Activated B cell treated with CpG ODN at 0.5 μM for 24 hours (primary cell): ENCODE measurements at regions of chr9 and their contacts with region 1.

Region 1: GRCh38 chr9:131709771-131710454 is 30.0 kb downstream of the RAPGEF1 start:
- DNase-seq: no peak
- ATAC-seq: peak; percentile 49
- H3K4me3 Mint-ChIP-seq: peak overlapping the region; percentile 44
- H3K27ac Mint-ChIP-seq: peak overlapping the region; percentile 70
- H3K4me1 Mint-ChIP-seq: peaks cover 92% of the 10 kb centered on the region
- H3K27me3 Mint-ChIP-seq: no peaks in the 10 kb centered on the region
- CTCF ChIP-seq: no peak

Region 2: DNA sequence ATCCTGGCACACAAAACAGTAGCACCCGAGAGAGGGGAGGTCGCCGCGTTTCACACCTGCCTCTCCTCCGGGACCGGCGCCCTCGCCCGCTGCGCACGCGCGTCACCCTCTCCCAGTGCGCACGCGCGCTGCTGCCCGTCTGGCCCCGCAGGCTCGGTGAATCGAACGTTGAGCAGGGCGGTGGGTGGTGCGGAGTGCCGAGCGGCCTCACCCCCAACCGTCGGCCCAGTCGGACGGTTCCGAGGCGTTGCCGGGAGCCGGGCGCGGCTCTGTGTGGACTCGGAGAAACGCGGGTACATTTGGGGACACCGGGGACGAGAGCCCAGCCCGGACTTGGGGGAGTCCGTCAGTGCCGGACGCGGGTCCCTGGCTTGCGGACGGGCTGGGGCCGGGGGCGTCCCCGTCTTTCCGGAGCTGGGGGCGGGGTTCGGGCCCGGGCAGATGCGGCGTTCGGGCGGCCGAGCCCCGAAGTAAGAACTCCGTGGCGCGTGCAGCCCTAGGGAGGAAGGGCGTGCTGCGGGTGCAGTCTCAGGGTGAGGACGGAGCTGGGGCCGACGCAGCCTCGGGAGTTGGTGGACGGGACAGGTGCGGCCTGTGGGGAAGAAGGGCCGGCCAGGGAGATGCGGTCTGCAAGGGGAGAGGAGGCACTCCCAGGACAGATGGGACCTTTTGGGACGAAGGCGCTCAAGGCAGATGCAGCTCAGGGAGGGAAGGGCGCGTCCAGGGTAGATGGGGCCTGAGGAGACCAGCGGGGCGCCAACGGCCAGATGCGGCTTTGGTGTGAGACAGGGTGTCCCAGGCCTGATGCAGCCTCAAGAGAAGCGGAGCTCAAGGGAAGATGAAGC is 206.9 kb before region 1 on chr9 and contains the start of gene POMT1:
- CTCF ChIA-PET with region 1: no interaction called
- POLR2A ChIA-PET with region 1: no interaction called
- intact Hi-C with region 1: no loop called
- DNase-seq: peak; percentile 89
- ATAC-seq: peak; percentile 87
- H3K4me3 Mint-ChIP-seq: peak within 1 kb of the TSS; percentile 90
- H3K27ac Mint-ChIP-seq: peak within 1 kb of the TSS; percentile 72
- H3K4me1 Mint-ChIP-seq: peaks cover 25% of the 10 kb centered on the region
- H3K27me3 Mint-ChIP-seq: no peaks in the 10 kb centered on the region
- CTCF ChIP-seq: no peak
- total RNA-seq, gene POMT1: 24.9 and 29.8 TPM in 2 replicates

Region 3: DNA sequence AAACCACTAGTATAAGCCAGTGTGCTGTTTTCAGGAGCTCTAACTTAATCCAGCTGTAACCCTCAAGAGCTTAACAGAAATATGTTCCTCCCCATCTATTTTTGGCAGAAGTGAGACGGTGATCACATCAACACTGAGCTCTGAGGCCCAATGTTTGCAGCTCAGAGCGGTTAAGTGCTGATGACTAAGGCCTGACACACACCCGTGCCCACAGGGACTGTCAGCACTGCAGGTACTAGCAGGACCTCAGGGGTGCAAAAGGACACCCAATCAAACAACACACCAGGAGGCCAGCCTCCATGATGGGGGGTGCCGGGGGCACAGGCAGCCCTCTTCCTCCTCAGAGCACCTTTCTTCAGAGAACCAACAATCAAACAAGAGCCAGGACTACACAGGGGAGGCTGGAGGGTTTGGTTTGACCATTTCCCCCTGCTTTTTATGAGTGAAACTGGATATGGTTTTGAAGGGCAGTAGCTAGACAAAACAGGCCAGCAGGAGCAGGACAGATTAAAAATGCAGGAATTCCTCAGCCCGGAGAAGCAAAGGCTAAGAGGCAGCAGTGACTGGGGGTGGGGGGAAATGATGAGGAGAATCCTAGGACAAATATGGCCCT is 31.3 kb before region 1 on chr9:
- CTCF ChIA-PET with region 1: no interaction called
- POLR2A ChIA-PET with region 1: interaction called, 29 read pairs
- intact Hi-C with region 1: no loop called
- DNase-seq: peak; percentile 63
- ATAC-seq: peak; percentile 90
- H3K4me3 Mint-ChIP-seq: peak overlapping the region; percentile 93
- H3K27ac Mint-ChIP-seq: peak overlapping the region; percentile 93
- H3K4me1 Mint-ChIP-seq: peaks cover 98% of the 10 kb centered on the region
- H3K27me3 Mint-ChIP-seq: no peaks in the 10 kb centered on the region
- CTCF ChIP-seq: no peak

Region 4: GRCh38 chr9:131722009-131722629 is 12.2 kb after region 1 on chr9:
- CTCF ChIA-PET with region 1: interaction called, 3 read pairs
- POLR2A ChIA-PET with region 1: interaction called, 22 read pairs
- intact Hi-C with region 1: loop called (anchors 1 kb)
- DNase-seq: no peak
- ATAC-seq: no peak
- H3K4me3 Mint-ChIP-seq: no peak overlapping the region
- H3K27ac Mint-ChIP-seq: peak overlapping the region; percentile 35
- H3K4me1 Mint-ChIP-seq: peaks cover 94% of the 10 kb centered on the region
- H3K27me3 Mint-ChIP-seq: no peaks in the 10 kb centered on the region
- CTCF ChIP-seq: no peak